ENCODE measurements at regions of chr9 and their contacts with region 1.

Region 1: DNA sequence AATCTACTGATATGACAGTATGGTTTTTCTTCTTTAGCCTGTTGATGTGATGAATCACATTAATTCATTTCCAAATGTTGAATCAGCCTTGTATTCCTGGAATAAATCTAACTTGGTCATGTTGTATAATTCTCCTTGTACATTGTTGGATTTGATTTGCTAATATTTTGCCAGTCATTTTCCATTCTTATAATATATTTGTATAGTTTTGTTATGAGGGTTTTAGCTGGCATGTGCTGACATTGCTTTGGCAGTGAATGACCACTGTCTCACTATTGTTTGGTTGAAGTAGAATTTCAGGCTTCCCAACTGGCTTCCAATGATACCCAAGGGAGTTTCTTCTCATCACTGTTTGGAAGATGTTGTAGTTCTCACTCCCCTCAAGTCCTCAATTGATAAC is 983.0 kb upstream of the PTPRD start:
- DNase-seq: no peak
- ATAC-seq: no peak
- H3K4me3 ChIP-seq: no peak overlapping the region
- H3K4me3 Mint-ChIP-seq: no peak overlapping the region
- H3K27ac ChIP-seq: no peak overlapping the region
- H3K27ac Mint-ChIP-seq: no peak overlapping the region
- H3K4me1 ChIP-seq: no peaks in the 10 kb centered on the region
- H3K4me1 Mint-ChIP-seq: no peaks in the 10 kb centered on the region
- H3K27me3 ChIP-seq: no peaks in the 10 kb centered on the region
- H3K27me3 Mint-ChIP-seq: no peaks in the 10 kb centered on the region
- CTCF ChIP-seq: no peak

Region 2: GRCh38 chr9:11549311-11549794 is 46.4 kb before region 1 on chr9:
- CTCF ChIA-PET with region 1: no interaction called
- POLR2A ChIA-PET with region 1: no interaction called
- intact Hi-C with region 1: loop called in 1 of 2 experiments (anchors 2 kb)
- DNase-seq: no peak
- ATAC-seq: no peak
- H3K4me3 ChIP-seq: no peak overlapping the region
- H3K4me3 Mint-ChIP-seq: no peak overlapping the region
- H3K27ac ChIP-seq: no peak overlapping the region
- H3K27ac Mint-ChIP-seq: no peak overlapping the region
- H3K4me1 ChIP-seq: no peaks in the 10 kb centered on the region
- H3K4me1 Mint-ChIP-seq: no peaks in the 10 kb centered on the region
- H3K27me3 ChIP-seq: no peaks in the 10 kb centered on the region
- H3K27me3 Mint-ChIP-seq: no peaks in the 10 kb centered on the region
- CTCF ChIP-seq: no peak

Region 3: GRCh38 chr9:11577522-11577921 is 18.2 kb before region 1 on chr9:
- CTCF ChIA-PET with region 1: no interaction called
- POLR2A ChIA-PET with region 1: no interaction called
- intact Hi-C with region 1: loop called in 1 of 2 experiments (anchors 2 kb)
- DNase-seq: no peak
- ATAC-seq: no peak
- H3K4me3 ChIP-seq: no peak overlapping the region
- H3K4me3 Mint-ChIP-seq: no peak overlapping the region
- H3K27ac ChIP-seq: no peak overlapping the region
- H3K27ac Mint-ChIP-seq: no peak overlapping the region
- H3K4me1 ChIP-seq: no peaks in the 10 kb centered on the region
- H3K4me1 Mint-ChIP-seq: no peaks in the 10 kb centered on the region
- H3K27me3 ChIP-seq: no peaks in the 10 kb centered on the region
- H3K27me3 Mint-ChIP-seq: no peaks in the 10 kb centered on the region
- CTCF ChIP-seq: no peak

Region 4: GRCh38 chr9:11933926-11934325 is 338.2 kb after region 1 on chr9:
- CTCF ChIA-PET with region 1: no interaction called
- POLR2A ChIA-PET with region 1: no interaction called
- intact Hi-C with region 1: no loop called
- DNase-seq: no peak
- ATAC-seq: no peak
- H3K4me3 ChIP-seq: no peak overlapping the region
- H3K4me3 Mint-ChIP-seq: no peak overlapping the region
- H3K27ac ChIP-seq: no peak overlapping the region
- H3K27ac Mint-ChIP-seq: no peak overlapping the region
- H3K4me1 ChIP-seq: no peaks in the 10 kb centered on the region
- H3K4me1 Mint-ChIP-seq: no peaks in the 10 kb centered on the region
- H3K27me3 ChIP-seq: no peaks in the 10 kb centered on the region
- H3K27me3 Mint-ChIP-seq: no peaks in the 10 kb centered on the region
- CTCF ChIP-seq: no peak

Measured in CD8-positive, alpha-beta T cell (primary cell).